Motor neuron (in vitro differentiated cells): ENCODE measurements at regions of chr2 and their contacts with region 1.

Region 1: GRCh38 chr2:205776139-205776538 is 93.8 kb downstream of the NRP2 start:
- ATAC-seq: peak in 3 of 8 experiments; percentile 60 to 89 (median 70)
- H3K4me3 ChIP-seq: no peak overlapping the region
- H3K27ac ChIP-seq: no peak overlapping the region
- H3K4me1 ChIP-seq: peaks cover 19 to 39% of the 10 kb centered on the region in 2 donors

Region 2: DNA sequence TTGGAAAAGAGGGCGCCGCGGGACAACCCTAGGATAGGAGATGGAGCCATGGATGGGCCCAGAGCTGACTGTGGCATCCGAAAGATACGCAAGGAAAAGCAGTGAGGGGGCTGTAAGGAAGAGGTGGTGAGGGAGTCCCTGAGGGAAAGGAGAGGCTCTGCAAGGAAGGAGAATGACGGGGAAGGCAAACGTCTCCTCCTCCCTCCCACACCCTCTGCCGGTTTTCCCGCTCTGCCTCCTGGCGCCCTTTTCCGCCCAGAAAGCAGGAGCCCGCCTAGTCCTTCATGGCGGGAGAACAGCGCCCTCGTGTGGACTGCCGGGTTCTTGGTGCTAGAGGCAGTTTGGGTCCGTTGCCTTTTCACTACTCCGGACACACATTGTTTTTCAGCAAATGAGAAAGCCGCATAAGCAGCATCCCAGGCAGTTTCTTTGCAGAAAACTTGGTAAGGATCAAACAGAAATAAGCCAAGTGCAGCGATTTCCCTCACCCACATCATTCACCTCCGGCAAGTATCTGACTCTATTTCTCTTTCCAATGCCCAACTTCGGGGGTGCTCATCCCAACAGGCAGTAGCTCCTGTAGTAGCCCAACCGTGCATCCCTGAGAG is 109.5 kb after region 1 on chr2:
- in situ Hi-C with region 1: loop called in 3 of 9 experiments (anchors 10 to 25 kb)
- ATAC-seq: peak in 5 of 8 experiments; percentile 25 to 100 (median 98)
- H3K4me3 ChIP-seq: no peak overlapping the region
- H3K27ac ChIP-seq: no peak overlapping the region
- H3K4me1 ChIP-seq: peaks cover 18 to 24% of the 10 kb centered on the region in 2 donors

Region 3: GRCh38 chr2:205903638-205904037 is 127.5 kb after region 1 on chr2:
- in situ Hi-C with region 1: loop called in 3 of 9 experiments (anchors 25 kb)
- ATAC-seq: peak in 3 of 8 experiments; percentile 78 to 94 (median 82)
- H3K4me3 ChIP-seq: no peak overlapping the region
- H3K27ac ChIP-seq: no peak overlapping the region
- H3K4me1 ChIP-seq: peaks cover 25 to 36% of the 10 kb centered on the region in 2 donors